ENCODE measurements at regions of chr1 and their contacts with region 1.

Region 1: DNA sequence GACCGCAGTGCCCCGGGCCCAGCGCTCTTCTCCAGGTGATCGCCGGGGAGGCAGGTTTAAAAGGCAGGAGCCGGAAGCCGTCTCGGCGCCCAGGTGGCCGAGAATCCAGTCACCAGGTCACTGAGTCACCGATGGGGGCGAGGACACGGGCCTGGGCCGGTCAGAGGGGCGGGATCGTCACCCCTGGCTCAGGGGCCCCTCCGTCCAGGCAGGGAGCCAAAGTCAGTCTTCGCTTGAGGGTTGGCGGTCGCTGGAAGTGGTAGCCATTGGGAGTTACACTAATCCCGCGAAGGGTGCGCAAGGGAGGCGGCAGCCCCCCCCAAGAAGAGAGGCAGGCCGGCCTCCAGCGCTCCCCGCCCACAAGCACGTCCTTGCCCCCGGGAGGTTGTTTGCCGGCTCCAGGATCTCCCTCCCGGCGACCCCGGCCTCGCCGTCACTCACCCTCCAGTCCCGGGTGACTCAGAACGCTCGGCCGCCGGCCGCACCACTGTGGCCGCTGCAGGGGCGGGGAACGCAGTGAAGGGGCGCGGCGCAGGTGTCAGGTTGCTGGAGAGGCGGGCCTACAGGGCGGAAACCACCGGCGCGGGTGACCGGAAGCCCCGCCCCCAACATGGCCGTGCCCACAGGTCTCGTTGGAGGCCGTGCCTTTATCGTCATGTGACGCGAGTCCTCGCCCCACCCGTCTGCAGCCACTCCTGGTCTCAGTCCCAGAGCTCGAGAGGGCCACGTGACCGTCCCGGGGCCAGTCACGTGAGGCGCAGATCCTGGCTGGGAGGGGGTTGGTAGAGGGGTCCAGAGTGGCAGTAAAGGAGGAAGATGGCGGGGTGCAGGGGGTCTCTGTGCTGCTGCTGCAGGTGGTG is at the starts of genes CLCN6 and MTHFR:
- DNase-seq: peak; percentile 99 to 100
- H3K4me3 ChIP-seq: peak within 1 kb of the TSS; percentile 62 to 76
- H3K27ac ChIP-seq: peak within 1 kb of the TSS; percentile 99
- H3K4me1 ChIP-seq: peaks cover 6 to 23% of the 10 kb centered on the region in 2 donors
- H3K27me3 ChIP-seq: no peaks in the 10 kb centered on the region
- CTCF ChIP-seq: peak in 2 of 4 experiments; percentile 17 to 20
- POLR2A ChIP-seq: peak; percentile 98 to 99
- total RNA-seq, gene CLCN6: 14.6 to 31.5 (median 22.7) TPM
- total RNA-seq, gene MTHFR: 15.0 to 56.8 (median 29.9) TPM

Region 2: GRCh38 chr1:11735854-11736745 is 69.6 kb before region 1 on chr1 and contains the start of gene AGTRAP:
- intact Hi-C with region 1: loop called (anchors 10 kb)
- DNase-seq: peak; percentile 96 to 97
- H3K4me3 ChIP-seq: peak within 1 kb of the TSS; percentile 69 to 76
- H3K27ac ChIP-seq: peak within 1 kb of the TSS; percentile 78 to 85
- H3K4me1 ChIP-seq: no peaks in the 10 kb centered on the region
- H3K27me3 ChIP-seq: no peaks in the 10 kb centered on the region
- CTCF ChIP-seq: peak in 1 of 4 experiments; percentile 5
- POLR2A ChIP-seq: peak; percentile 31 to 61
- total RNA-seq, gene AGTRAP: 4.1 to 34.7 (median 31.2) TPM